ENCODE measurements at regions of chr6 and their contacts with region 1.

Region 1: DNA sequence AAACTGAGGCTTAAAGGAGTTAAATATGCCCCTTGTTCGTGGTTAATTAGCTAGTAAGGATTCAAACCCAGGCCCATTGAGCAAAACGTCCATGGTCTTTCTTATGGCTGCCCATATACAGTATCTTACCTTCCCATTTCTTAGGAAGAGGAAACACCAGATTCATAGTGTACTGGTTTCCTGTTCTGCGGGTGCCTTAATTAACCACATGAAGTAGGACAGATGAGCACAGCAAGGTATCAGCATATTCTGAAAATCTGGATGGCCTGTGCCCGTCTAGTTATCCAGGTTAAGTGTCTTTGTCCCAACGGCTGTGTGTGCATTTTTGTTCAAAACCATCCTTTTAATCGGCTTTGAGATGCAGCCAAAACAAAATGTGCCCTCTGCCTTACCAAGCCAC is 93.4 kb upstream of the TRAF3IP2 start:
- DNase-seq: no peak
- H3K4me3 Mint-ChIP-seq: no peak overlapping the region
- H3K27ac Mint-ChIP-seq: no peak overlapping the region
- H3K4me1 Mint-ChIP-seq: peaks cover 12% of the 10 kb centered on the region
- H3K27me3 Mint-ChIP-seq: no peaks in the 10 kb centered on the region

Region 2: DNA sequence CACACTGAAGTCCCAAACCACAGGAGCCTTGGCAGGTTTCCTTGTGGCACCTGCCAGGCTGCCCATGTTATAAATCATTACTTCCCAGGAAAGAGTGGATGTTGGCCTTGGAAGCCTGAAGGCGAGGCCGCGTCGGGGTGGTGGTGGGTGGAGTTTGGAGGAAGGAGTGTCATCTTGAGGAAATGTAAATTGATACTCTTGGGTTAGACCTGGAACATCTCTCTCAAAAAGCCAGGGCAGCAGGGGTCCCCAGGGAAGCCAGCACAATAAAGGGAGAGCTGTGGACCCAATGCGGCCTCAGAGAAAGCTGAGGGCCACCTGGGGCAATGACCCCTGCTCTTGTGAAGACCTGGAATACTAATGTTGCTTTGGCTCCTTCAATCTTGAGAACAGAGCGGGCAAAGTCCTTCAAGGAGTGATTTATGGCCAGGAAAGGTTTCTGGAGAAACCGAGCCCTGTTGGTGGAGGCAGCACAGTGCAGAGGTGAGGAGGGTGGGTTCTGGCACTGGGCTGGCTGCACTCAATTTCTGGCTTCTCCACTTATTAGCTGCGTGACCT is 67.1 kb before region 1 on chr6:
- intact Hi-C with region 1: no loop called
- DNase-seq: no peak
- H3K4me3 Mint-ChIP-seq: no peak overlapping the region
- H3K27ac Mint-ChIP-seq: no peak overlapping the region
- H3K4me1 Mint-ChIP-seq: no peaks in the 10 kb centered on the region
- H3K27me3 Mint-ChIP-seq: peaks cover 12% of the 10 kb centered on the region

Region 3: DNA sequence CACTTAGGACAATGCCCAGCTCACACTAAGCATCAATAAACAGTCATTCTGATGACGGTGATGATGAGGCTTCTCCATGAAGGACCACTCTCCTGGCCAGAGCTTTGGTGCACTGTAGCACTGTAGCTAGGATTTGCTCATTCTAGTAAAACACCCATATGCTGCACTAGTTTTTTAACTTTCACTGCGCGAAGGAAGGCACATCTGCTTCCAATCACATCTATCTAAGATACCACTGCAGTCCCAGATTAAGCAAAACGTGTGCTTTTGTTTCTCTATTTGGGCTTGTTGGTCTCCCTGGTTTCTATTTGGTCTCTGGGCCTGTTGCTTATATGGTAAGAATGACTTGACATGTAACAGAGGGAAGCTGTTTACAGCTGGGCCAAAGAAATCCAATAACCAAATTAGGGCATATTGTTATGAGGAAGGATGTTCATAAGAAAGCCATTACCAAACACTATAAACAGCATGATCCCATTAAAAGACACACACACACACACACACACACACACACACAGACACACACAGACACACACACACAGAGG is 450.7 kb after region 1 on chr6:
- intact Hi-C with region 1: no loop called
- DNase-seq: no peak
- H3K4me3 Mint-ChIP-seq: no peak overlapping the region
- H3K27ac Mint-ChIP-seq: no peak overlapping the region
- H3K4me1 Mint-ChIP-seq: peaks cover 13% of the 10 kb centered on the region
- H3K27me3 Mint-ChIP-seq: peaks cover 24% of the 10 kb centered on the region

Region 4: DNA sequence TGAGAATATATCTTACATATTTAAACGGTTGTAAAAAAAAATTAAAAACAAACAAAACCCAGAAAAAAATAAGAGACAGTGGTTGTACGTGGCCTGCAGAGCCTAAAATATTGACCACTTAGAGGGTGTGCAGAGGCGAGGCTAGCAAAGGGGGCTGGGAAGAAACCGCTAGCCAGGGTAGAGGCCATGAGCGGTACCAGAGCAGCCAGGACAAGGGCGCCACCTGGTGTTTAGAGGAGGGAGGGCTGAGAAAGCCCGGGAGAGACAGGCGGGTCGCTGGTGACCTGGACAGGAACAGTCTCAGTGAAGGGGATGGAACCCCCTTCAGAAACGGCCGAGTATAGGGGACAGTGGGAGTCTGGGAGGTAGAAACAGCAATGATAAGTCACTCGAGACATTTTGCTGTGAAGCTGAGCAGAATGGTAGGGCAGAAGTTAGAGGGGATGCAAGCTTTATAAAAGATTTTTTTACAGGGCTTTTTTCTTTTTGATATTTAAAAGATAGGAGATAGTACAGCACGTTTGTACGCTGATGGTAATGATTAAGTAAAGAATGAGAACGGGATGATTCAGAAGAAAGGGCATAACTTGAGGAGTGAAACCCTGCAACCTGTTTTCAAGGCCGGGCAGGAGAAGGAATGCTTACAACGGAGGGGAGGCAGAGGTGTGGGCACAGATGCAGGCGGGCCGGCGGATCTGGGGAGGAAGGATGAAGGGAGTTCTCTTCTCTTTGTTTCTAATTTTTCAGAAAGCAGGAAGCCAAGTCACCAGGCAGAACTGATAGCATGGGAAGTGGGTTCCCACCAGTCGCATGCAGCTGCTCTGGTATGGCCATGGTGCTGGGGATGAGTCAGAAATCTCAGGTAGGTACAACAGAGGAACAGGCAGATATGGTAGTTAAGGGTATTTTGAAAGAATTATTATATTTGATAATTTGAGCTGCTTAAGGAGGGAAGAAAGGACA is 464.5 kb after region 1 on chr6:
- intact Hi-C with region 1: loop called (anchors 5 kb)
- DNase-seq: peak; percentile 61
- H3K4me3 Mint-ChIP-seq: peak overlapping the region; percentile 45
- H3K27ac Mint-ChIP-seq: no peak overlapping the region
- H3K4me1 Mint-ChIP-seq: peaks cover 16% of the 10 kb centered on the region
- H3K27me3 Mint-ChIP-seq: peaks cover 55% of the 10 kb centered on the region

Measured in activated T-helper 2 cell treated with anti-CD3 and anti-CD28 coated beads, Interferon-gamma antibody, Interleukin-2, Interleukin-4, amounts not matched to agents 10 μg/mL and 5 μg/mL and 100 μg/mL, durations not matched to agents 14 hours and 24 hours and 36 hours (primary cell).